ENCODE measurements at regions of chr6 and their contacts with region 1.

Region 1: GRCh38 chr6:42911171-42912021 is 4.5 kb upstream of the PTCRA start:
- H3K4me3 ChIP-seq: no peak overlapping the region
- H3K27ac ChIP-seq: no peak overlapping the region
- H3K4me1 ChIP-seq: no peaks in the 10 kb centered on the region
- CTCF ChIP-seq: no peak

Region 2: GRCh38 chr6:42808492-42809483 is 102.6 kb before region 1 on chr6:
- CTCF ChIA-PET with region 1: no interaction called
- POLR2A ChIA-PET with region 1: no interaction called
- H3K4me3 ChIP-seq: no peak overlapping the region
- H3K27ac ChIP-seq: no peak overlapping the region
- H3K4me1 ChIP-seq: no peaks in the 10 kb centered on the region
- CTCF ChIP-seq: no peak

Region 3: GRCh38 chr6:42879372-42880239 is 31.8 kb before region 1 on chr6 and contains the start of gene RPL7L1:
- CTCF ChIA-PET with region 1: no interaction called
- POLR2A ChIA-PET with region 1: no interaction called
- H3K4me3 ChIP-seq: peak within 1 kb of the TSS; percentile 95
- H3K27ac ChIP-seq: peak within 1 kb of the TSS; percentile 99
- H3K4me1 ChIP-seq: no peaks in the 10 kb centered on the region
- CTCF ChIP-seq: peak; percentile 63

Region 4: DNA sequence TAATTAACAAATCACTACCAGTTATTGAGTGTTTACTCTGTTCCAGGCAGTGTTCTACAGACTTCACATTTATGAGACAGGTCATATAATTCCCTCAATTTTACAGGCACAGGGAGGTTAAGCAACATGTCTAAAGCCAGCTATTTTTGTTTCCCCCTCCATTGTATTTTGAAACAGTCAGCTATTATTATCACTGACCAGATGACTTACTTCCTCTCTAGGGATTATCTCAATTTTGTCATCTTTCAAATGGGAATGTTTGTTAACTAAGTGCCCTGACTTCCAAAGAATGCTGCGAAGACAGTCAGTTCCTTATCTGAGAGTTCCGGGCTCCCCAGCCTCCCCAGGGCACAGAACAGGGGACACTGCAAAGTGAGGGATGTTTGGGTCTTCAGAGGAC is 12.3 kb after region 1 on chr6:
- CTCF ChIA-PET with region 1: interaction called, 10 read pairs
- POLR2A ChIA-PET with region 1: interaction called, 27 read pairs
- H3K4me3 ChIP-seq: no peak overlapping the region
- H3K27ac ChIP-seq: no peak overlapping the region
- H3K4me1 ChIP-seq: peaks cover 3% of the 10 kb centered on the region; the same call in 1 of the 2 replicates
- CTCF ChIP-seq: no peak

Region 5: GRCh38 chr6:42947950-42948349 is 36.6 kb after region 1 on chr6:
- CTCF ChIA-PET with region 1: interaction called, 3 read pairs
- POLR2A ChIA-PET with region 1: interaction called, 14 read pairs
- H3K4me3 ChIP-seq: no peak overlapping the region
- H3K27ac ChIP-seq: no peak overlapping the region
- H3K4me1 ChIP-seq: no peaks in the 10 kb centered on the region
- CTCF ChIP-seq: no peak

Measured in HEK293 (cell line).